ENCODE measurements at regions of chr2 and their contacts with region 1.

Region 1: DNA sequence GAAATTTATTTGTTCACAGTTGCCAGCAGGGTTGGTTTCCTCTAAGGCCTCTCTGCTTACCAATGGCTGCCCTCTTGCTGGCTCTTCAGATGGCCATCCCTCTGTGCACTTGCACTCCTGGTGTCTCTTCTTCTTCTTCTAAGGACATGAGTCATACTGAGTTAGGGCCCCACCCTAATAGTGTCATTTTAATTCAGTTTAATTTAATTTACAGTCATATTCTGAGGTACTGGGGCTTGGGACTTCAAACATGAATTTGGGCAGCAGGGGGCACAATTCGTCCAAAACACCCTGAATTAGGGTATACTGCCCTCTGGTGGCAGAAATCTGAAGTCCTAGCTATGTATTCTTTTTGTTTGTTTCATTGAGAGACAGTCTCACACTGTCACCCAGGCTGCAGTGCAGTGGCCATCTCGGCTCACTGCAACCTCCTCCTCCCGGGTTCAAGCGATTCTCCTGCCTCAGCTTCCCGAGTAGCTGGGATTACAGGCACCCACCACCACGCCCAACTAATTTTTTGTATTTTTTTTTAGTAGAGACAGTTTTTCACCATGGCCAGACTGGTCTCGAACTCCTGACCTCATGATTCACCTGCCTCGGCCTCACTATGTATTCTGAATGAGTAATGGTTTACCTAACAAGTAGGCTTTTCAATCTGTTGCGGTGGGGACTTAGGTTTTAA is 19.8 kb downstream of the SLC4A1AP start:
- DNase-seq: peak; percentile 96
- ATAC-seq: peak; percentile 95
- H3K4me3 Mint-ChIP-seq: peak overlapping the region; percentile 26
- H3K27ac Mint-ChIP-seq: peak overlapping the region; percentile 85
- H3K4me1 Mint-ChIP-seq: peaks cover 29% of the 10 kb centered on the region
- H3K27me3 Mint-ChIP-seq: no peaks in the 10 kb centered on the region

Region 2: DNA sequence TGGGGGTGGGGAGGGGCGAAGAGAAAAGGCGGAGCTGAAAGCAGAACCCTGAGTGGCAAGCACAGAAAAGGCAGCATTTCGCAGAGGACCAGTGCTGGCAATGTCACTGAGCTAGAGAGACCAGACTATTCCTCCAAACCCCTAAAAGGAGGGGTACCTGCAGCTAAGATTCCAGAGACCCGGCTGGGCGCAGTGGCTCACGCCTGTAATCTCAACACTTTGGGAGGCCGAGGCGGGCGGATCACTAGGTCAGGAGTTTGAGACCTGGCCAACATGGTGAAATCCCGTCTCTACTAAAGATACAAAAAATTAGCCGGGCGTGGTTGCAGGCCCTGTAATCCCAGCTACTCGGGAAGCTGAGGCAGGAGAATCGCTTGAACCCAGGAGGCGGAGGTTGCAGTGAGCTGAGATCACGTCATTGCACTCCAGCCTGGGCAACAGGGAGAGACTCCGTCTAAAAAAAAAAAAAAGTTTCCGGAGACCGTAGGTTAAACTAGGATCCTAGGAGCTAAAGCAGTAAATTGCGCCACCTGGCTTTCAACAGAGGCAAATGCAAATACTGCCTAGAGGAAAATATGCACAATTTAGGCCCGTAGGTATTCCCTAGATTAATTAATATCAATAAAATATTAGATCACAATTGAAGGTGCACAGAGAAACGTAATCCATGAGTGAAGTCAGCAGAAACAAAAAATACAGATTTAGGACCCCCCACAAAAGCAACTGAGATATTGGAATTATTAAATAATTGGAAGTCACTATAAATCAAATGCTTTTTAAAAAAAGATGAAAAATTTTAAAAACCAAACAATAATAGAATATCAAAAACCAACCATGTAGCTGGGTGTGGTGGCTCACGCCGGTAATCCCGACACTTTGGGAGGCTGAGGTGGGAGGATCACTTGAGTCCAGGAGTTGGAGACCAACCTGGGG is 380.2 kb before region 1 on chr2:
- CTCF ChIA-PET with region 1: interaction called, 11 read pairs
- POLR2A ChIA-PET with region 1: no interaction called
- DNase-seq: peak; percentile 66
- ATAC-seq: peak; percentile 57
- H3K4me3 Mint-ChIP-seq: peak overlapping the region; percentile 56
- H3K27ac Mint-ChIP-seq: peak overlapping the region; percentile 58
- H3K4me1 Mint-ChIP-seq: peaks cover 13% of the 10 kb centered on the region
- H3K27me3 Mint-ChIP-seq: peaks cover 4% of the 10 kb centered on the region

Region 3: GRCh38 chr2:27409321-27410073 is 274.0 kb before region 1 on chr2 and contains the start of gene PPM1G:
- CTCF ChIA-PET with region 1: interaction called, 17 read pairs
- POLR2A ChIA-PET with region 1: interaction called, 8 read pairs
- DNase-seq: peak; percentile 97
- ATAC-seq: peak; percentile 96
- H3K4me3 Mint-ChIP-seq: peak within 1 kb of the TSS; percentile 83
- H3K27ac Mint-ChIP-seq: peak within 1 kb of the TSS; percentile 89
- H3K4me1 Mint-ChIP-seq: peaks cover 34% of the 10 kb centered on the region
- H3K27me3 Mint-ChIP-seq: peaks cover 8% of the 10 kb centered on the region
- total RNA-seq, gene PPM1G: 130 to 136 TPM

Region 4: GRCh38 chr2:27582695-27583389 is 100.7 kb before region 1 on chr2 and contains the start of gene ZNF512:
- CTCF ChIA-PET with region 1: interaction called, 11 read pairs
- POLR2A ChIA-PET with region 1: no interaction called
- DNase-seq: peak; percentile 91
- ATAC-seq: peak; percentile 95
- H3K4me3 Mint-ChIP-seq: peak within 1 kb of the TSS; percentile 96
- H3K27ac Mint-ChIP-seq: peak within 1 kb of the TSS; percentile 96
- H3K4me1 Mint-ChIP-seq: peaks cover 44% of the 10 kb centered on the region
- H3K27me3 Mint-ChIP-seq: peaks cover 17% of the 10 kb centered on the region
- total RNA-seq, gene ZNF512: 37.0 to 39.0 TPM

Region 5: DNA sequence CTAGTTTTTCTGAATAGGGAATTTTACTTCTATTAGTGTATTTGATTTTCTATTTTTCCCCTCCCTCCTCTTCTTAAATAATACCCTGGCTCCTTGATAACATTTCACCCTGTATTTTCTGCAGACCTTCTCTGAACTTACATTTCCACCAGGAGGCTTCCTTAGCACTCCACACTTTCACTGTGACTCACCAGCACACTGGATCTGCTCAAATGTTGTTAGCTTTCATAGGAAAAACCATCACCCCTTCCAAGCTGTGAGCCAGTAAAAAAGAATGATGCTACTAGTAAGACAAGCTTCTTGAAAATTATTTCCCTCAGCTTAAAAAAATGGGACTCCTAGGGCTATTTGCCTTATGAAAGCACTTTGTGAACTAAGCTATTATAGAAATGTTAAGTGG is 36.2 kb before region 1 on chr2:
- CTCF ChIA-PET with region 1: interaction called, 12 read pairs
- POLR2A ChIA-PET with region 1: no interaction called
- DNase-seq: no peak
- ATAC-seq: no peak
- H3K4me3 Mint-ChIP-seq: no peak overlapping the region
- H3K27ac Mint-ChIP-seq: peak overlapping the region; percentile 41
- H3K4me1 Mint-ChIP-seq: no peaks in the 10 kb centered on the region
- H3K27me3 Mint-ChIP-seq: no peaks in the 10 kb centered on the region

Region 6: GRCh38 chr2:27672723-27673486 is 10.6 kb before region 1 on chr2:
- CTCF ChIA-PET with region 1: interaction called, 40 read pairs
- POLR2A ChIA-PET with region 1: interaction called, 5 read pairs
- DNase-seq: no peak
- ATAC-seq: no peak
- H3K4me3 Mint-ChIP-seq: no peak overlapping the region
- H3K27ac Mint-ChIP-seq: no peak overlapping the region
- H3K4me1 Mint-ChIP-seq: peaks cover 2% of the 10 kb centered on the region
- H3K27me3 Mint-ChIP-seq: no peaks in the 10 kb centered on the region

Measured in activated CD8-positive, alpha-beta T cell treated with anti-CD3 and anti-CD28 coated beads, Interleukin-2, amount 10 ng/mL, durations not matched to agents 7 days and 5 days (primary cell).